ENCODE measurements at regions of chr6 and their contacts with region 1.

Region 1: DNA sequence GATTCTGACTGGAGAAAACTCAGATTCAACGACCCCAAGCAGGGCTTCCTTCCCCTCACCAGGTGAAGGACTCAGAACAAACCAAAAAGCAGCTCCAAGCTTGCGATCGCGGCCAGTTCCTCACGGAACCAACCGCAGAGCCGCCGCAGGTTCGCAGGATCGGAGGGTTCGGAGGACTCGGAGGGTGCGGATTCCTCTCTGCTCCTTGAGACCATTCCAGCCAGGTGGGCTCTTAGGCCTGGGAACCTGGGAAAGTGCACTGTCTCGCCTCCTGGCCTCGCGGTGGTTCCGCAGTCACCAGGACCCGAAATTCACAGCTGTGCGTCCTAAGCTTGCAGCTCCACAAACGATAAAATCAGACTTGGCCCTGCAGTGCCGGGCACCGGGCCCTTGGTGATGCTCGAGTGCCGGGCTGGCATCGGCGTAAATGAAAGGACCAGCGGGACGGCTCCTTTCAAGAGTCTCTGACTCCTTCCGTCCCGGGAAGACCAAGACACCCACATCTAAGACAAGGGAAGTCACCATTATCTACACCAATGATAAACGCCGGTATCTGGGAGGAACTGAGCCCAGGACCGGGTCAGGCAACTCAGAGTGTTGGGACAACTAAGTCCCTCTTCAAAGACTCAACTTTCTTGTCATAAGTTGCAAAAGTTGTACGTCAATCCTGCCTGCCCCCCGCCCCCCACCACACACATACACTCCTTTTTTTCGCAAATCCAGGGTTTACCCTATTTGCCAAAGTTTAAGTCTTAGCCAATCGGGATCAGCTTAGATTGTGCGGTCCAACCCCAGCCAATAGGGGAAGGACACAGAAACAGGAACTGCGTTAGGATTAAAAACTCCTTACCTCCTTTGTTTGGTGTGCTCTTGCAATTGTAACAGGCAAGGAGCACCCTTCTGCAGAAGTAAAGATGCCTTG is 69.8 kb upstream of the PRSS16 start:
- DNase-seq: peak; percentile 88
- H3K27ac ChIP-seq: peak overlapping the region; percentile 91
- CTCF ChIP-seq: peak; percentile 79

Region 2: DNA sequence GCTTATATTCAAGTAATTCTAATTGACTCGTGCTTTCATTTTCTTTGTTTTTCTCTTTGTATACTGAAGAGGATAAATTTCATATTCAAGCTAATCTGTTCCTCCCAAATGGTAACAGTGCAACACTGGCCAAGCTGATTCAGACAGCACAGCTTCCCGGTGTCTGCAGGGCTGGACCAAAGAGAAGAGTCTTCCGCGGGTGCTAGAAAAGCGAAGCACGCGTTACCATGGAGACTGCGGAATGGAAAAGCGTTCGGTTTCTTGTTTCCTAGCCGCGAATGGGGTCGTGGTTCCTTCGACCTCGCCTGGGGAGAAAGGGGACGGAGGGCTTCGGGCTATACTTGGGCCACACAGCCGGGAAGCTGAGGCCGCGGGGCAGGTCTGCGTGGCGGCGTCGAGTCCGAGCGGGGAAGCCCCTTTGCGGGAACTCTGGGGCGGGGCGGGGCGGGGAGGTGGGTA is 1833.6 kb after region 1 on chr6:
- CTCF ChIA-PET with region 1: no interaction called
- POLR2A ChIA-PET with region 1: interaction called, 11 read pairs
- DNase-seq: peak; percentile 49
- H3K27ac ChIP-seq: no peak overlapping the region
- CTCF ChIP-seq: no peak

Measured in RWPE1 (cell line).